Activated CD4-positive, alpha-beta T cell treated with anti-CD3 and anti-CD28 coated beads, Interleukin-2, amount 10 ng/mL, durations not matched to agents 7 days and 5 days (primary cell): ENCODE measurements at regions of chr5 and their contacts with region 1.

Region 1: DNA sequence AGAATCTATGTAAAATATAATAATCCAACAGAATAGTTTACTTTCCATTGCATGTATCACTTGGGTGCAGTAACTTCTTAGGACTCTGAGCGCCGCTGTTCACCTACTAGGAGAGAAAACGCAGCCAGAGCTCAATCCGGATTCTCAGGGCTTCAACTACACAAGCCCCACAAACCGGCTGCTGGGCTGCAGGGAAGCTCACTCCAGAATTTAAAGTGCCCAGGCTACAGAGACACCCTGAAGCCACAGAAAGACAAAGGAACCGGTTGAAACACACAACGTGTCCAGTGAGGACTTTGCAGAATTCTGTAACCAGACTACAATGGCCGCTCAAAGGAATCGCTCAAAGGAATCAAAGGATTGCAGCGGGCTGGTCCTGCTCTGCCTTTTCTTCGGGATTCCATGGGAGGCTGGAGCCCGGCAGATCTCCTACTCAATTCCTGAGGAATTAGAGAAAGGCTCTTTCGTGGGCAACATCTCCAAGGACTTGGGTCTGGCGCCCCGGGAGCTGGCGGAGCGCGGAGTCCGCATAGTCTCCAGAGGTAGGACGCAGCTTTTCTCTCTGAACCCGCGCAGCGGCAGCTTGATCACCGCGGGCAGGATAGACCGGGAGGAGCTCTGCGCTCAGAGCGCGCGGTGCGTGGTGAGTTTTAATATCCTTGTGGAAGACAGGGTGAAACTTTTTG is at the start of gene PCDHGA10:
- DNase-seq: peak; percentile 47
- H3K4me3 Mint-ChIP-seq: peak within 1 kb of the TSS; percentile 71
- H3K27ac Mint-ChIP-seq: peak within 1 kb of the TSS; percentile 50
- H3K4me1 Mint-ChIP-seq: peaks cover 17% of the 10 kb centered on the region
- H3K27me3 Mint-ChIP-seq: peaks cover 64% of the 10 kb centered on the region
- total RNA-seq, gene PCDHGA10: not detected

Region 2: GRCh38 chr5:141135030-141135717 is 277.8 kb before region 1 on chr5 and contains the start of gene PCDHB5:
- CTCF ChIA-PET with region 1: no interaction called
- POLR2A ChIA-PET with region 1: no interaction called
- DNase-seq: no peak
- H3K4me3 Mint-ChIP-seq: no peak within 1 kb of the TSS
- H3K27ac Mint-ChIP-seq: no peak within 1 kb of the TSS
- H3K4me1 Mint-ChIP-seq: peaks cover 2% of the 10 kb centered on the region
- H3K27me3 Mint-ChIP-seq: peaks cover 9% of the 10 kb centered on the region
- total RNA-seq, gene PCDHB5: not detected

Region 3: GRCh38 chr5:141369994-141370848 is 42.8 kb before region 1 on chr5 and contains the start of gene PCDHGB3:
- CTCF ChIA-PET with region 1: interaction called, 11 read pairs
- POLR2A ChIA-PET with region 1: no interaction called
- DNase-seq: no peak
- H3K4me3 Mint-ChIP-seq: peak within 1 kb of the TSS; percentile 48
- H3K27ac Mint-ChIP-seq: no peak within 1 kb of the TSS
- H3K4me1 Mint-ChIP-seq: peaks cover 4% of the 10 kb centered on the region
- H3K27me3 Mint-ChIP-seq: peaks cover 53% of the 10 kb centered on the region
- total RNA-seq, gene PCDHGB3: 0.12 TPM in 1 of 2 experiments, not detected in the other

Region 4: GRCh38 chr5:141402553-141403260 is 10.3 kb before region 1 on chr5 and contains the start of gene PCDHGA9:
- CTCF ChIA-PET with region 1: interaction called, 10 read pairs
- POLR2A ChIA-PET with region 1: interaction called, 3 read pairs
- DNase-seq: no peak
- H3K4me3 Mint-ChIP-seq: no peak within 1 kb of the TSS
- H3K27ac Mint-ChIP-seq: no peak within 1 kb of the TSS
- H3K4me1 Mint-ChIP-seq: no peaks in the 10 kb centered on the region
- H3K27me3 Mint-ChIP-seq: peaks cover 48% of the 10 kb centered on the region
- total RNA-seq, gene PCDHGA9: not detected

Region 5: GRCh38 chr5:141512390-141512910 is 99.5 kb after region 1 on chr5:
- CTCF ChIA-PET with region 1: interaction called, 13 read pairs
- POLR2A ChIA-PET with region 1: no interaction called
- DNase-seq: peak; percentile 83
- H3K4me3 Mint-ChIP-seq: peak overlapping the region; percentile 61
- H3K27ac Mint-ChIP-seq: peak overlapping the region; percentile 61
- H3K4me1 Mint-ChIP-seq: peaks cover 27% of the 10 kb centered on the region
- H3K27me3 Mint-ChIP-seq: no peaks in the 10 kb centered on the region

Region 6: DNA sequence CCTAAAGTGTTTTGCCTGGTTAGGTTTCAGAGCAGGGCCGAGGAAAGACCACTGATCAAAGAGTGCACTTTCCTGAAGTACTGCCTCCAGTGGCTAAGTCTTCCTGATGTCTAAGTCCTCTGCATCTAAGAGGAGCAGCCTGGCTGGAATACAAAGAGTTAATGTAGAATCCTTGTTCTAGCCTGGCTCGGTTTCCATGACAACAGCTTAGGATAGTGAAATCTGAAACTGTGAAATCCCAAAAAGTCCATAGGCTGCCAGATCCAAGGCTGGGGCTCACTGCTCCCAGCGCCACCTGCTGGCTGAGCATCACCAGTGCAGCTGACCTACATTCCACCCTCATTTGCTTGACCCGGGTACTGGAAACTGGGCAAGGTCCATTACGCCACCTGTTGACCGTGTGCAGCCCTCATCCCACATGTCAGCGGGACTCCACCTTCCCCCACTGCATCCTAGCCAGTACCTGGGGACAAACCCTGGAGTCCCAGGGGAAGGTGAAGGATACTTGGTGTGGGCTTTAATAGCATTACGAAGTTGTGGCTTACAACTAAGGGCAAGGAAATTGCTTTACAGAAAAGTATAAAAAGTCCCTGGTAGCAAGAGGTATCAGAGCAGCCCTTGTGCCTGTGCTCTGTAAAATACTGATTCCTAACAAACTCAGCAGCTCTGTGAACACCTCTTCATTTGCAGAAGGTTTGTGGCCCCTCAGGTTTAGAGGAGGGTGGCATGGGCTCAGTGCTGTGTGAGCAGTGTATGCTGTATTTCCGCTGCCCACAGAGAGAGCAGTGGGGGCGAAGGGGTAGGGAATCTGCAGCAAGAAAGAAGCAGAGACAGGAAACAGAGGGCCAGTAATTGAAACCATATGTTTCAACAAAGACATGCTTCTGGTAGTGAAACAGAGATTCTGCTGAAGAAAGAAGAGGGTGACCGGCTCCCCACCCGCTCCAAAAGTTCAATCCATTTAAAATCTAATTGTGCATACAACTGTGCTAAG is 111.9 kb after region 1 on chr5:
- CTCF ChIA-PET with region 1: interaction called, 19 read pairs
- POLR2A ChIA-PET with region 1: no interaction called
- DNase-seq: peak; percentile 41
- H3K4me3 Mint-ChIP-seq: no peak overlapping the region
- H3K27ac Mint-ChIP-seq: no peak overlapping the region
- H3K4me1 Mint-ChIP-seq: peaks cover 22% of the 10 kb centered on the region
- H3K27me3 Mint-ChIP-seq: no peaks in the 10 kb centered on the region

Region 7: GRCh38 chr5:141557681-141558136 is 144.7 kb after region 1 on chr5:
- CTCF ChIA-PET with region 1: interaction called, 10 read pairs
- POLR2A ChIA-PET with region 1: no interaction called
- DNase-seq: peak; percentile 77
- H3K4me3 Mint-ChIP-seq: no peak overlapping the region
- H3K27ac Mint-ChIP-seq: peak overlapping the region; percentile 81
- H3K4me1 Mint-ChIP-seq: peaks cover 24% of the 10 kb centered on the region
- H3K27me3 Mint-ChIP-seq: no peaks in the 10 kb centered on the region